ENCODE measurements at regions of chr2 and their contacts with region 1.

Region 1: GRCh38 chr2:165149439-165149838 is 54.4 kb downstream of the SCN3A start:
- DNase-seq: no peak
- ATAC-seq: no peak
- H3K4me3 ChIP-seq: no peak overlapping the region
- H3K27ac ChIP-seq: no peak overlapping the region
- H3K4me1 ChIP-seq: no peaks in the 10 kb centered on the region
- H3K27me3 ChIP-seq: no peaks in the 10 kb centered on the region
- CTCF ChIP-seq: no peak
- EP300 ChIP-seq: no peak
- POLR2A ChIP-seq: no peak
- RAD21 ChIP-seq: no peak

Region 2: DNA sequence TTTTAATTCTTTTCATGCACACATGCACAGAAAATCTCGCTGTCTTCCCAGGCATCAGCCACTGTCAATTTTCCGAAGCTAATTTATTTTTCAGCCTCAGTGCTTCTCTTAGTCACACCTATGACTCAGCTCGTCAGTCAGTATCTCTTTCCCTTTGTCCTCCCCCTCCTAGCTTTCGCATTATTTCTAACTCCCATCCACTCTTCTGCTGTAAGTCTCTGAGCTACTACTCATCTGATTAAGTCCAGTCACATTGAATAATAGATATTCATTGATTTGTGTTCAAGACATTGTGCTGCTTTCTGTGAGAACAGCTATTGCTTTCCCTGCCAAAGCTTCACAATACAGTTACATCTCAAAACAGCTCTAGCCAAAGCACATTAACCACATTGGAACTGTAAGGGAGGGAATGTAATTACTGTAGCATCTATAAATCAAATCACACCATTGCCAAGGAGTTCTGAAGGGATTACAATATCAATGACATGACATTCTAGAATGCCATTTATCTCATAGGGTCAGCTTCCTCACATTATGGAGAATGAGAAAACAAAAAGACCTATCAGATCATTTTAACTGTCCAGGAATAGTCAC is 35.0 kb before region 1 on chr2:
- CTCF ChIA-PET with region 1: no interaction called
- POLR2A ChIA-PET with region 1: no interaction called
- in situ Hi-C with region 1: no loop called
- intact Hi-C with region 1: loop called (anchors 1 kb)
- DNase-seq: peak in 1 of 4 experiments; percentile 11
- ATAC-seq: no peak
- H3K4me3 ChIP-seq: no peak overlapping the region
- H3K27ac ChIP-seq: no peak overlapping the region
- H3K4me1 ChIP-seq: no peaks in the 10 kb centered on the region
- H3K27me3 ChIP-seq: no peaks in the 10 kb centered on the region
- CTCF ChIP-seq: no peak
- EP300 ChIP-seq: no peak
- POLR2A ChIP-seq: no peak
- RAD21 ChIP-seq: no peak